Heart right ventricle (tissue), 16 donors: ENCODE measurements at regions of chr22 and their contacts with region 1.

Region 1: GRCh38 chr22:17077255-17077654 is 7.5 kb upstream of the IL17RA start:
- DNase-seq: no peak
- ATAC-seq: no peak
- H3K4me3 ChIP-seq: no peak overlapping the region
- H3K27ac ChIP-seq: no peak overlapping the region
- H3K4me1 ChIP-seq: peaks cover 0 to 18% (median 0%) of the 10 kb centered on the region in 9 donors
- H3K27me3 ChIP-seq: peaks cover 0 to 3% (median 0%) of the 10 kb centered on the region in 7 donors
- CTCF ChIP-seq: no peak

Region 2: GRCh38 chr22:17164392-17165024 is 87.3 kb after region 1 on chr22:
- intact Hi-C with region 1: loop called in 6 of 10 experiments (anchors 5 to 10 kb)
- DNase-seq: no peak
- ATAC-seq: no peak
- H3K4me3 ChIP-seq: no peak overlapping the region
- H3K27ac ChIP-seq: no peak overlapping the region
- H3K4me1 ChIP-seq: peaks cover 4 to 27% (median 11%) of the 10 kb centered on the region in 9 donors
- H3K27me3 ChIP-seq: no peaks in the 10 kb centered on the region
- CTCF ChIP-seq: peak in 1 of 9 donors; percentile 15

Region 3: GRCh38 chr22:17430412-17430811 is 353.2 kb after region 1 on chr22:
- intact Hi-C with region 1: loop called in 1 of 10 experiments (anchors 5 kb)
- DNase-seq: peak in 1 of 2 donors; percentile 34
- ATAC-seq: peak; percentile 64 to 96 (median 76)
- H3K4me3 ChIP-seq: no peak overlapping the region
- H3K27ac ChIP-seq: peak overlapping the region in 2 of 10 donors; percentile 4 to 23
- H3K4me1 ChIP-seq: peaks cover 0 to 23% (median 13%) of the 10 kb centered on the region in 9 donors
- H3K27me3 ChIP-seq: no peaks in the 10 kb centered on the region
- CTCF ChIP-seq: no peak